GM12878 (cell line): ENCODE measurements at regions of chr12 and their contacts with region 1.

Region 1: GRCh38 chr12:94207849-94208621 is 59.7 kb downstream of the PLXNC1 start:
- DNase-seq: peak; percentile 89
- ATAC-seq: peak; percentile 78
- H3K4me3 ChIP-seq: peak overlapping the region; percentile 58
- H3K27ac ChIP-seq: peak overlapping the region; percentile 100
- H3K4me1 ChIP-seq: peaks cover 47% of the 10 kb centered on the region
- H3K27me3 ChIP-seq: no peaks in the 10 kb centered on the region
- CTCF ChIP-seq: no peak
- EP300 ChIP-seq: peak in 1 of 2 experiments; percentile 77; a peak in 3 of 4 replicates
- POLR2A ChIP-seq: no peak; the same call in 1 of the 2 replicates
- RAD21 ChIP-seq: no peak; the same call in 1 of the 2 replicates

Region 2: GRCh38 chr12:93449277-93449676 is 758.8 kb before region 1 on chr12:
- CTCF ChIA-PET with region 1: no interaction called
- POLR2A ChIA-PET with region 1: no interaction called
- RAD21 ChIA-PET with region 1: no interaction called
- SMC1A ChIA-PET with region 1: no interaction called
- in situ Hi-C with region 1: no loop called
- intact Hi-C with region 1: no loop called
- DNase-seq: no peak
- ATAC-seq: peak; percentile 90
- H3K4me3 ChIP-seq: no peak overlapping the region
- H3K27ac ChIP-seq: no peak overlapping the region
- H3K4me1 ChIP-seq: peaks cover 4% of the 10 kb centered on the region; the same call in 1 of the 2 replicates
- H3K27me3 ChIP-seq: no peaks in the 10 kb centered on the region
- CTCF ChIP-seq: no peak
- EP300 ChIP-seq: no peak
- POLR2A ChIP-seq: no peak
- RAD21 ChIP-seq: no peak

Region 3: GRCh38 chr12:94089891-94090290 is 118.1 kb before region 1 on chr12:
- CTCF ChIA-PET with region 1: no interaction called
- POLR2A ChIA-PET with region 1: no interaction called
- RAD21 ChIA-PET with region 1: no interaction called
- SMC1A ChIA-PET with region 1: no interaction called
- in situ Hi-C with region 1: no loop called
- intact Hi-C with region 1: no loop called
- DNase-seq: no peak
- ATAC-seq: no peak
- H3K4me3 ChIP-seq: no peak overlapping the region
- H3K27ac ChIP-seq: no peak overlapping the region
- H3K4me1 ChIP-seq: no peaks in the 10 kb centered on the region
- H3K27me3 ChIP-seq: no peaks in the 10 kb centered on the region
- CTCF ChIP-seq: no peak
- EP300 ChIP-seq: no peak
- POLR2A ChIP-seq: no peak
- RAD21 ChIP-seq: no peak

Region 4: GRCh38 chr12:94172973-94173372 is 35.1 kb before region 1 on chr12:
- CTCF ChIA-PET with region 1: interaction called, 27 read pairs
- POLR2A ChIA-PET with region 1: interaction called, 41 read pairs
- RAD21 ChIA-PET with region 1: interaction called, 107 read pairs
- SMC1A ChIA-PET with region 1: interaction called, 93 read pairs
- in situ Hi-C with region 1: no loop called
- intact Hi-C with region 1: loop called (anchors 2 kb)
- DNase-seq: no peak
- ATAC-seq: no peak
- H3K4me3 ChIP-seq: no peak overlapping the region
- H3K27ac ChIP-seq: peak overlapping the region; percentile 92
- H3K4me1 ChIP-seq: peaks cover 47% of the 10 kb centered on the region
- H3K27me3 ChIP-seq: no peaks in the 10 kb centered on the region
- CTCF ChIP-seq: no peak
- EP300 ChIP-seq: no peak
- POLR2A ChIP-seq: no peak
- RAD21 ChIP-seq: no peak

Region 5: DNA sequence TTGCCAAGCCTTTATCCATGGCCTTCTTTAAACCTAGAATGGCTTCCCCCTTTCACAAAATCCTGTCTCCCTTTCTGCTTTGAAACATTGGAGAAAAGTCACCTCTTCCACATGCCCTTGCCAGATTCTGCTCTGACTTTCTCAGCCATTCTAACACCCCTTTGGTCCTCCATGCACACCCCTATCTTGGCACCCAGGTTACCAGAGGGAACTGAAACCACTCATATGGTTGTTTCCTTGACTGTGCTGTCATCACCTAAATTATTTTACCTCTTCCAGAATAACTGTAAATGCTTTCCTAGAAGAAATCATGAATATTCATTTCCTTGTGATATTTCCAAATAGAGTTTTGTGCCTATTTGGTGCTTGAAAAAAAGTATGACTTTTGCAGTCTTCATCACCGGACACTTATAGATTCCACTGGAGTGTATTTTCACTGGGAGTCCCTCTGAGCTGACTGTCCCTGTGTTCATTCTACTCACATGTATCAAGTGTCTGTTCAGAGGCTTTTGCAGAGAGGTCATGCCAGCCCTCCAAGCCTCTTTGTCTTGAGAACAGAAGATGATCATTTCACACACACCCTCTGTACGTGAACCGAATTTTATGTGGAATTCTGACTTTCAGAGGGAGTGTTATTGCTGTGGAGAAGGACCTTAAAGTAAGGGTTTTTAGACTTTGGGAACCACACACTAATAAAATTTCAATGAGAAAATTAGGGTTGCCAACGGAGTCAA is 14.5 kb after region 1 on chr12:
- CTCF ChIA-PET with region 1: interaction called, 19 read pairs
- POLR2A ChIA-PET with region 1: interaction called, 11 read pairs
- RAD21 ChIA-PET with region 1: interaction called, 40 read pairs
- SMC1A ChIA-PET with region 1: interaction called, 85 read pairs
- in situ Hi-C with region 1: no loop called
- intact Hi-C with region 1: no loop called
- DNase-seq: no peak
- ATAC-seq: peak; percentile 80
- H3K4me3 ChIP-seq: no peak overlapping the region
- H3K27ac ChIP-seq: no peak overlapping the region
- H3K4me1 ChIP-seq: peaks cover 27% of the 10 kb centered on the region
- H3K27me3 ChIP-seq: no peaks in the 10 kb centered on the region
- CTCF ChIP-seq: no peak
- EP300 ChIP-seq: peak in 1 of 2 experiments; percentile 65; a peak in 1 of 4 replicates
- POLR2A ChIP-seq: no peak
- RAD21 ChIP-seq: no peak

Region 6: DNA sequence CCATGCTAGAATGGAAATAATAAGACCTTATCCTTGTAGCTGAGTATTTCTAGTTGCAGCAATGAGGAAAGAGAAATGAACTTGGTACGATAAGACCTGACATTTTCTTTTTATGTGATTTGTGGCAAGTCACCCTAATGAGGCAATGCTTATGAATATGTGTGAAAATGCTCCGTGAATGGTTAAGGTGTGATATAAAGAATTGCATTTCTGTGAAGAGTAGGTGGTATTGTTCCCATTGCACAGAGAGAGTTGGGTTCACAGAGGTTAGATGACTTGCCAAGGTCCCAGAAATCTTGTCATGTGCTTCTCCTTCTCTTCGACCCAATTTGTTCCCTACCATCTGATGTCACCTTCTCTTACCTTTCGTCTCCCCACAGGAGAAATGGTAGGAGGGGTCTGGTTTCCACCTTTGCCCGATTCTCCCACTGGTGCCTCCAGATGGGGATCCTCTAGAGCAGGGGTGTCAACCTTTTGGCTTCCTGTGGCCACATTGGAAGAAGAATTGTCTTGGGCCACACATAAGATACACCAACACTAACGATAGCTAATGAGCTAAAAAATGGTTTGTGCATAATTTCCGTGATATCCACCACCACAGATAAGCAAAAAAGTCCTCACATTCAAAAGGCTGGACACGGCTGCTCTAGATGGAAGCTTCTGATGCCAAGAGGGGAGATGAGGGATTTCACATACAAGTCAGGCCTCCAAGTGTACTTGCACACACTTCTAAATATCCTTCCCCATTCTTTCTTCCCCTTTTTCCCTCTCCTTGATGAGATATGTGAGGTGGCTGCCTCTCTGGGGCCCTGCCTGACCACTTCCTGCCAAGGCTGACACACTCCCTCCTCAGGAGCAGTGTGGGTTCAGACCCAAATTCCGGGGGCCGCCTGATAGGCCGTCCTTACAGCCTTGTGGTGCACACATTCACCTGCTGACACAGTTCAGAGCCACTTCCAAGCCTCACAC is 36.4 kb after region 1 on chr12:
- CTCF ChIA-PET with region 1: interaction called, 11 read pairs
- POLR2A ChIA-PET with region 1: interaction called, 33 read pairs
- RAD21 ChIA-PET with region 1: interaction called, 66 read pairs
- SMC1A ChIA-PET with region 1: interaction called, 104 read pairs
- in situ Hi-C with region 1: no loop called
- intact Hi-C with region 1: no loop called
- DNase-seq: no peak
- ATAC-seq: peak; percentile 86
- H3K4me3 ChIP-seq: no peak overlapping the region
- H3K27ac ChIP-seq: peak overlapping the region; percentile 41
- H3K4me1 ChIP-seq: peaks cover 37% of the 10 kb centered on the region
- H3K27me3 ChIP-seq: no peaks in the 10 kb centered on the region
- CTCF ChIP-seq: no peak
- EP300 ChIP-seq: peak in 1 of 2 experiments; percentile 63; a peak in 1 of 4 replicates
- POLR2A ChIP-seq: no peak; the same call in 1 of the 2 replicates
- RAD21 ChIP-seq: no peak

Region 7: GRCh38 chr12:94262228-94263010 is 54.4 kb after region 1 on chr12:
- CTCF ChIA-PET with region 1: interaction called, 11 read pairs
- POLR2A ChIA-PET with region 1: interaction called, 56 read pairs
- RAD21 ChIA-PET with region 1: interaction called, 107 read pairs
- SMC1A ChIA-PET with region 1: interaction called, 95 read pairs
- in situ Hi-C with region 1: no loop called
- intact Hi-C with region 1: loop called (anchors 1 kb)
- DNase-seq: no peak
- ATAC-seq: peak; percentile 80
- H3K4me3 ChIP-seq: peak overlapping the region; percentile 35; the same call in 1 of the 2 replicates
- H3K27ac ChIP-seq: peak overlapping the region; percentile 88
- H3K4me1 ChIP-seq: peaks cover 59% of the 10 kb centered on the region
- H3K27me3 ChIP-seq: no peaks in the 10 kb centered on the region
- CTCF ChIP-seq: no peak
- EP300 ChIP-seq: peak in 1 of 2 experiments; percentile 11; a peak in 1 of 4 replicates
- POLR2A ChIP-seq: peak; percentile 76
- RAD21 ChIP-seq: no peak; the same call in 1 of the 2 replicates

Region 8: GRCh38 chr12:94379479-94380113 is 171.6 kb after region 1 on chr12:
- CTCF ChIA-PET with region 1: no interaction called
- POLR2A ChIA-PET with region 1: no interaction called
- RAD21 ChIA-PET with region 1: interaction called, 6 read pairs
- SMC1A ChIA-PET with region 1: interaction called, 10 read pairs
- in situ Hi-C with region 1: no loop called
- intact Hi-C with region 1: no loop called
- DNase-seq: no peak
- ATAC-seq: peak; percentile 58; the same call in 2 of the 3 replicates
- H3K4me3 ChIP-seq: no peak overlapping the region
- H3K27ac ChIP-seq: no peak overlapping the region
- H3K4me1 ChIP-seq: peaks cover 4% of the 10 kb centered on the region
- H3K27me3 ChIP-seq: no peaks in the 10 kb centered on the region
- CTCF ChIP-seq: no peak
- EP300 ChIP-seq: no peak
- POLR2A ChIP-seq: no peak
- RAD21 ChIP-seq: no peak